WTC11 (cell line): ENCODE measurements at regions of chr2 and their contacts with region 1.

Region 1: GRCh38 chr2:222973237-222973636 is 78.8 kb upstream of the KCNE4 start:
- DNase-seq: no peak
- ATAC-seq: no peak
- H3K4me3 Mint-ChIP-seq: no peak overlapping the region
- H3K27ac Mint-ChIP-seq: no peak overlapping the region
- H3K4me1 Mint-ChIP-seq: peaks cover under 1% of the 10 kb centered on the region
- H3K27me3 Mint-ChIP-seq: no peaks in the 10 kb centered on the region
- CTCF ChIP-seq: no peak

Region 2: DNA sequence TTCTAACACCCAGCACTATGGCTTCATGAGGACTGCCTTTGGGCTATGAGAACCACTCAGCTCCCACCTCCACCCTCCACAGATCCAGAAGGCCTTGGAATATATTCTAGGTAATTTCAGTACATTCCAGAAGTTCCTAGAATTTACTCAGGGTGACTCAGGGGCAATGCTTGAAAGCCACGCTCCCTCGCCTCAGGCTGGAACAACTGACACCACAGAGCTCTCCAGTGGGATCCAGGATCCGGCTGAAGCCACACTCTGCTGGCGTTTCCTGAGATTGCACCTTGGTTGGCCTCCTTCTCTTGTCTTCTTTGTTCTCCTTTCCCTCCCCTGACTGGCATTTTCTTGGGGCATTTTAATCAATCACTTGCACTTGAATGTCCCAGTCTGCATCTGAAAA is 13.9 kb before region 1 on chr2:
- CTCF ChIA-PET with region 1: interaction called, 15 read pairs
- POLR2A ChIA-PET with region 1: no interaction called
- DNase-seq: peak; percentile 46
- ATAC-seq: peak; percentile 98
- H3K4me3 Mint-ChIP-seq: no peak overlapping the region
- H3K27ac Mint-ChIP-seq: no peak overlapping the region
- H3K4me1 Mint-ChIP-seq: peaks cover 16% of the 10 kb centered on the region
- H3K27me3 Mint-ChIP-seq: no peaks in the 10 kb centered on the region; the same call in 1 of the 2 replicates
- CTCF ChIP-seq: no peak

Region 3: GRCh38 chr2:223008162-223008561 is 34.9 kb after region 1 on chr2:
- CTCF ChIA-PET with region 1: no interaction called
- POLR2A ChIA-PET with region 1: no interaction called
- DNase-seq: no peak
- ATAC-seq: no peak
- H3K4me3 Mint-ChIP-seq: no peak overlapping the region
- H3K27ac Mint-ChIP-seq: no peak overlapping the region
- H3K4me1 Mint-ChIP-seq: no peaks in the 10 kb centered on the region
- H3K27me3 Mint-ChIP-seq: no peaks in the 10 kb centered on the region
- CTCF ChIP-seq: no peak

Region 4: DNA sequence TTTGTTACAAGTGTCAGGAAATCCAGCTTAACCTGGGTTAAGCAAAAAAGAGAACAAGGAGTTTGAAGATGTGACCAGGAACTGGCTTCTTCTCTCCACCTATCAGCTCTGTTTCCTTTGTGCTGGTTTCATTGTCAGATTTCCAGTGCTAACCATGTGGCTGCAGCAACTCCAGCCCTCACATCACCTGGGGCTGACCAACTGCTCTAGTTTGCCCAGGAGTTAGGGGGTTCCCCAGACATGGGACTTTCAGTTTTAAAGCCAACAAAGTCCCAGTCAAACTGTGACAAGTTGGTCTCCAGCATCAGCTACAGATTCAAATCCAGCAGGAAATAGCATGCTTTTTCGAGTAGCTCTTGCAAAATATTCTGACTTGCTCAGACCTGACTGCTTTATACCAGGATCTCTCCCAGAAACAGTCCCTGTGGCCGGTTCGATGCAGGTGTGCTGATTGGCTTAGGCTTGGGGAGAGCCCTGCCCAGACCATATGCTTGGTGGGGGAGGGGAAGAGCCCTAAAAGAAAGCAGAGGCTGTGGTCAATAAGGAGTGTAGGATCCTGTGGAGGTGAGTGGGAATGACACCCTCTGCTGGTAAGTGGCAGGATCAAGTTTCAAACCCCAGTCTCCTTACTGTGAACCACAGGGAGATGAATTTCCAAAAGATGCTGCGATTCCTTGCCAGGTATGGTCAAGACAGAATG is 128.3 kb after region 1 on chr2:
- CTCF ChIA-PET with region 1: interaction called, 37 read pairs
- POLR2A ChIA-PET with region 1: no interaction called
- DNase-seq: peak; percentile 66
- ATAC-seq: peak; percentile 100
- H3K4me3 Mint-ChIP-seq: no peak overlapping the region
- H3K27ac Mint-ChIP-seq: no peak overlapping the region
- H3K4me1 Mint-ChIP-seq: peaks cover 23% of the 10 kb centered on the region
- H3K27me3 Mint-ChIP-seq: peaks cover 3% of the 10 kb centered on the region; the same call in 1 of the 2 replicates
- CTCF ChIP-seq: peak; percentile 24; the same call in 1 of the 2 replicates

Region 5: GRCh38 chr2:223306371-223306770 is 333.1 kb after region 1 on chr2:
- CTCF ChIA-PET with region 1: interaction called, 12 read pairs
- POLR2A ChIA-PET with region 1: no interaction called
- DNase-seq: peak; percentile 44
- ATAC-seq: peak; percentile 85
- H3K4me3 Mint-ChIP-seq: no peak overlapping the region
- H3K27ac Mint-ChIP-seq: no peak overlapping the region
- H3K4me1 Mint-ChIP-seq: peaks cover 2% of the 10 kb centered on the region; the same call in 1 of the 2 replicates
- H3K27me3 Mint-ChIP-seq: peaks cover 2% of the 10 kb centered on the region; the same call in 1 of the 2 replicates
- CTCF ChIP-seq: peak; percentile 33; the same call in 1 of the 2 replicates

Region 6: GRCh38 chr2:223442847-223443246 is 469.6 kb after region 1 on chr2:
- CTCF ChIA-PET with region 1: no interaction called
- POLR2A ChIA-PET with region 1: no interaction called
- DNase-seq: no peak
- ATAC-seq: no peak
- H3K4me3 Mint-ChIP-seq: no peak overlapping the region
- H3K27ac Mint-ChIP-seq: no peak overlapping the region
- H3K4me1 Mint-ChIP-seq: peaks cover 4% of the 10 kb centered on the region; the same call in 1 of the 2 replicates
- H3K27me3 Mint-ChIP-seq: no peaks in the 10 kb centered on the region
- CTCF ChIP-seq: no peak